ENCODE measurements at regions of chr5 and their contacts with region 1.

Region 1: DNA sequence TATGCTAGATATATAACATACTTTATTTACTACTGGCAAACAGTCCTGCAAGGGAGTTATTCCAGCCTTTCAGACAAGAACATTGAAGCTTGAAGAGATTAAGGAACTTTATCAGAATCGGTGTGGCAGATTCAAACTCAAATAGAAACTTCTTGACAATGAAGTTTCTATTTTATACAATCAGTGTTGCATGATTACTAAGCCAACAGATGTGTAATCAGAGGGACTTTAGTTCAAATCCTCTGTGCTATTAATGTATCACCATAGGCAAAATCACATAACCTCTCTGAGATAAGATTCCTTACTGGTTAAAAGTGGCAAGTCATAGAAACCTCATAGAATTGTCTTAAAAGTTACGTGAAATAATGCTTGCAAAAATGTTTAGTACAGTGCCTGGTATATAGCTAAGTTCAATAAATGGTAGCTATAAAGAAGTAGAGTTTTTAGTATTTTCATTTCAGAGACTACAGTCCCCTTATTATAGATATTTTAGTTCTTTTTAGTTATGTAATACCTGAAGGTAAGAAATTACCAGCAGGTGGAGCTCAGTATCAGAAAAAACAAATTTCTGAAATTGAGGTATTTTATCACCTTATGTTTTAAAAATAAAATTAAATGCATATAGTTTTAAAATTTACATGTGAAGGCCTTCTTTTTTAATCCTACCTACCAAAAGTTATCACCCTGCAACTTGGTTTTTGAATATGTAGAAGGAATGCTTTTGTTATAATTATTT is 172.1 kb downstream of the FER start:
- ATAC-seq: no peak
- H3K4me3 ChIP-seq: no peak overlapping the region
- H3K27ac ChIP-seq: no peak overlapping the region
- H3K4me1 ChIP-seq: no peaks in the 10 kb centered on the region

Region 2: GRCh38 chr5:108418197-108418596 is 501.6 kb before region 1 on chr5:
- in situ Hi-C with region 1: no loop called
- ATAC-seq: no peak
- H3K4me3 ChIP-seq: no peak overlapping the region
- H3K27ac ChIP-seq: no peak overlapping the region
- H3K4me1 ChIP-seq: peaks cover 0 to 5% of the 10 kb centered on the region in 2 donors

Region 3: GRCh38 chr5:108642167-108642906 is 277.4 kb before region 1 on chr5:
- in situ Hi-C with region 1: loop called in 1 of 9 experiments (anchors 25 kb)
- ATAC-seq: peak; percentile 77 to 98 (median 87)
- H3K4me3 ChIP-seq: no peak overlapping the region
- H3K27ac ChIP-seq: no peak overlapping the region
- H3K4me1 ChIP-seq: peaks cover 0 to 26% of the 10 kb centered on the region in 2 donors